ENCODE measurements at regions of chr10 and their contacts with region 1.

Region 1: DNA sequence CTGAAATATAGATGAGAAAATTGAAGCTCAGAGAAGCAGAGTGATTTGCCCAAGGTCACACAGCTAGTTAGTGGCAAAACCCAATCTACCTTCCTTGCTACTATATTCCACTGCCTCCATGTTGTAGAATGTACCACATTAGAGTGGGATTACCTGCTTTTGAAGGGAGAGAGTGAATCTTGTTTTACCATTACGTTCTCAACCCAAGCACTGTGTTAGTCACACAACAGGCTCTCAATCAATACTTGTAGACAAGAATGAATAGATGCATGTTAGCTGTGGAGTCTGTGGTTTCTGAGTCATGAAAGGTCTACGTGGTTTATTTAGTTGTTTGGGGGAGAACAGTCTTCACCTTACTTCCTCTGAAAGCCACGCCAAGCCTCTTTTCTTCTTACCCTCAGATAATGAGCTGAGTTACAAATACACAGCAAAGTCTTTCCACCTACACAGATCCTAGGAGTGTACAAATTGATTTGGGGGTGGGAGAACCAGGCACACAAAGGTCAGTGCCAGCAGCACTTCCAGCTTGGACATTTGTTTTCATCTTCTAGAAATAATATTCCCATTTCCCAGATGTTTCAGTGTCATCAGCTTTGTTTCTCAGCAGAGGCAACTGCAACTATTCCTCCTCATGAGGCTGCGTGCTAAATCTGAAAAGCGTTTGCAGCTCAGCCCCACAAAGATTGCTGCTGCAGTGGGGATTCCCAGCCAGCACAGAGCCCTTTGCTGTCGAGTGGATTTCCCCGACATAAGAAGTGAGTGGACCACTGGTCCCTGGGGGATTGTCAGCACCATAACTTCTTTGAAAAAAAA is 71.5 kb upstream of the ADO start:
- DNase-seq: peak in 8 of 9 donors; percentile 54 to 83 (median 76)
- ATAC-seq: peak; percentile 92
- H3K4me3 ChIP-seq: no peak overlapping the region
- H3K4me3 Mint-ChIP-seq: peak overlapping the region in 7 of 10 donors; percentile 14 to 72 (median 65)
- H3K27ac ChIP-seq: peak overlapping the region; percentile 22
- H3K27ac Mint-ChIP-seq: peak overlapping the region in 2 of 9 donors; percentile 78 to 85
- H3K4me1 ChIP-seq: peaks cover 24 to 49% of the 10 kb centered on the region in 2 donors
- H3K4me1 Mint-ChIP-seq: peaks cover 0 to 17% (median 0%) of the 10 kb centered on the region in 7 donors
- H3K27me3 ChIP-seq: no peaks in the 10 kb centered on the region
- H3K27me3 Mint-ChIP-seq: peaks cover 0 to 14% (median 0%) of the 10 kb centered on the region in 5 donors

Region 2: GRCh38 chr10:61992671-61993668 is 740.1 kb before region 1 on chr10:
- CTCF ChIA-PET with region 1: no interaction called
- POLR2A ChIA-PET with region 1: no interaction called
- intact Hi-C with region 1: loop called in 1 of 2 experiments (anchors 5 kb)
- DNase-seq: peak in 8 of 9 donors; percentile 39 to 85 (median 72)
- ATAC-seq: peak; percentile 90
- H3K4me3 ChIP-seq: peak overlapping the region; percentile 28
- H3K4me3 Mint-ChIP-seq: peak overlapping the region in 9 of 10 donors; percentile 61 to 89 (median 64)
- H3K27ac ChIP-seq: peak overlapping the region; percentile 63
- H3K27ac Mint-ChIP-seq: peak overlapping the region; percentile 82 to 96 (median 93)
- H3K4me1 ChIP-seq: peaks cover 33 to 37% of the 10 kb centered on the region in 2 donors
- H3K4me1 Mint-ChIP-seq: peaks cover 28 to 81% (median 70%) of the 10 kb centered on the region in 7 donors
- H3K27me3 ChIP-seq: no peaks in the 10 kb centered on the region
- H3K27me3 Mint-ChIP-seq: no peaks in the 10 kb centered on the region

Region 3: DNA sequence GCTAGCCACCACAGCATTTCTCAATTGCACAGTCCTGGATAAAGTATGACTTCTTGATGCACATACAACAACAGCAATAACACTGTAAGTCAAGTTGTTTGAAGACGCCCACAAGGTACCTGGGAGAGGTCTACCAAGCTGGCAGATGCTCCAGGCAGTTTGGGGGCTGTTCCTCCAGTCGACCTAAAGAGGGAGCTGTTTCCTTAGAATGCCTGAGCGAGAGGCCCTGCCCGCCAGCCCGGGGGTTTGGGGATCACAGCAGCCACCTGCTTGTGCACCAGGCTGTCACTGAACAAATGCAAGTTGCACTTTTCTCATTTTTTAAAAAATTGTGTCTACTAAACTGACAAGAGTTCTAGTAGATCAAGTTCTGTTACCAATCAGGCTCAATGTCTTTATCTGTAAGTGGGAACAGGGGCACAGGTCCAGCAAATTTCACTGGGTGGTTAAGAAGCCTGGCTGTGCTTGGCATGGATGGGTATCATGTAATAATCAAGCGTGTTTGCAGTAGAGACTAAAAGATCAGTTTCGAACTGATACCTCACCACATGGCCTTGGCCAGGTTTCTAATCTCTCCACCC is 122.3 kb before region 1 on chr10:
- CTCF ChIA-PET with region 1: interaction called, 3 read pairs
- POLR2A ChIA-PET with region 1: no interaction called
- intact Hi-C with region 1: loop called in 1 of 2 experiments (anchors 2 kb)
- DNase-seq: peak; percentile 48 to 81 (median 74)
- ATAC-seq: peak; percentile 93
- H3K4me3 ChIP-seq: no peak overlapping the region
- H3K4me3 Mint-ChIP-seq: no peak overlapping the region
- H3K27ac ChIP-seq: no peak overlapping the region
- H3K27ac Mint-ChIP-seq: peak overlapping the region in 1 of 9 donors; percentile 50
- H3K4me1 ChIP-seq: no peaks in the 10 kb centered on the region
- H3K4me1 Mint-ChIP-seq: peaks cover 0 to 36% (median 0%) of the 10 kb centered on the region in 7 donors
- H3K27me3 ChIP-seq: no peaks in the 10 kb centered on the region
- H3K27me3 Mint-ChIP-seq: peaks cover 0 to 14% (median 4%) of the 10 kb centered on the region in 5 donors

Region 4: GRCh38 chr10:62681211-62681940 is 51.7 kb before region 1 on chr10:
- CTCF ChIA-PET with region 1: no interaction called
- POLR2A ChIA-PET with region 1: no interaction called
- intact Hi-C with region 1: loop called (anchors 1 to 2 kb)
- DNase-seq: peak in 8 of 9 donors; percentile 7 to 84 (median 22)
- ATAC-seq: peak; percentile 96
- H3K4me3 ChIP-seq: no peak overlapping the region
- H3K4me3 Mint-ChIP-seq: peak overlapping the region in 1 of 10 donors; percentile 59
- H3K27ac ChIP-seq: no peak overlapping the region
- H3K27ac Mint-ChIP-seq: peak overlapping the region in 3 of 9 donors; percentile 11 to 83 (median 78)
- H3K4me1 ChIP-seq: peaks cover 6 to 18% of the 10 kb centered on the region in 2 donors
- H3K4me1 Mint-ChIP-seq: peaks cover 8 to 45% (median 14%) of the 10 kb centered on the region in 7 donors
- H3K27me3 ChIP-seq: no peaks in the 10 kb centered on the region
- H3K27me3 Mint-ChIP-seq: peaks cover 0 to 6% (median 0%) of the 10 kb centered on the region in 5 donors

Region 5: GRCh38 chr10:62759599-62760175 is 26.6 kb after region 1 on chr10:
- CTCF ChIA-PET with region 1: no interaction called
- POLR2A ChIA-PET with region 1: no interaction called
- intact Hi-C with region 1: loop called (anchors 2 kb)
- DNase-seq: no peak
- ATAC-seq: peak; percentile 49
- H3K4me3 ChIP-seq: no peak overlapping the region
- H3K4me3 Mint-ChIP-seq: no peak overlapping the region
- H3K27ac ChIP-seq: no peak overlapping the region
- H3K27ac Mint-ChIP-seq: no peak overlapping the region
- H3K4me1 ChIP-seq: peaks cover 15 to 20% of the 10 kb centered on the region in 2 donors
- H3K4me1 Mint-ChIP-seq: peaks cover 17 to 27% (median 20%) of the 10 kb centered on the region in 7 donors
- H3K27me3 ChIP-seq: no peaks in the 10 kb centered on the region
- H3K27me3 Mint-ChIP-seq: peaks cover 0 to 3% (median 0%) of the 10 kb centered on the region in 5 donors

Region 6: DNA sequence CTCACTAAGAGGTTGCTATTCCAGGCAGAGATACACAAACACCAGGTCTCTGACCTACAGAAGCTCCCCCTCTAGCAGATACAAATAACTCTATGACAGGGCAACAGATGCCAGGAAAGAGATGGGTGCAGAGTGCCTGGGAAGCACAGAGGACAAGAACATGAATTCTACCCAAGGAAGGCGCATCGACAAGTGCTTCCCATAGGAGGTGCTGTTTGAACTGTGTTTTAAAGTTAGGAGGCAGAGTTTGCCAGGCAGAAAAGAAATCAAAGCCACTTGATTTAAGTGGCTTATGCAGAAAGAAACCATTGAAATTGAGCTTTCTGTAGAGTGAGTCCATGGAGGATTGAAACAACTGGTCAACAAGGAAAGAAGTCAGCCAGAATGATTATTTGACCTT is 118.4 kb after region 1 on chr10:
- CTCF ChIA-PET with region 1: no interaction called
- POLR2A ChIA-PET with region 1: no interaction called
- intact Hi-C with region 1: loop called in 1 of 2 experiments (anchors 1 kb)
- DNase-seq: no peak
- ATAC-seq: no peak
- H3K4me3 ChIP-seq: no peak overlapping the region
- H3K4me3 Mint-ChIP-seq: no peak overlapping the region
- H3K27ac ChIP-seq: no peak overlapping the region
- H3K27ac Mint-ChIP-seq: no peak overlapping the region
- H3K4me1 ChIP-seq: peaks cover 0 to 39% of the 10 kb centered on the region in 2 donors
- H3K4me1 Mint-ChIP-seq: peaks cover 10 to 54% (median 14%) of the 10 kb centered on the region in 7 donors
- H3K27me3 ChIP-seq: no peaks in the 10 kb centered on the region
- H3K27me3 Mint-ChIP-seq: peaks cover 0 to 18% (median 13%) of the 10 kb centered on the region in 5 donors

Region 7: DNA sequence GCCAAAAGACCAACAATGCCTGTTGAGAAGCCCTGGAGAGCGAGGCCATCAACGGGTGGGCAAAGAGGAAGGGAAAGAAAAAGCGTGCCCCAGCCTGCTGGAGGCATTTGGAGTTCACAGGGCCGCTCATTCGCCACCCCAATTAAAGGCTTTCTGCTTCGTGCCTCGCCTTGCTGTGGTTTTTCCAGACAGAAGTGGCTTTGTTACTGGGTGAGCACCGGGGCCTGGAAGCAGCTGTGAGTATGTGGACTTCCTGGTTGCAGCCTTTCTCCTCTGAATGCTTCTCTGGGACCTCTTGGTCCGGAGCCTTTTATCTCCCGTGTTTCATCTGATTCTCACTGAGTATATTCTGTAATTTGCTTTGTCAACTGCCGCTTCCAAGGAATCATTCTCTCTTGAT is 201.2 kb after region 1 on chr10:
- CTCF ChIA-PET with region 1: no interaction called
- POLR2A ChIA-PET with region 1: no interaction called
- intact Hi-C with region 1: no loop called
- DNase-seq: no peak
- ATAC-seq: no peak
- H3K4me3 ChIP-seq: no peak overlapping the region
- H3K4me3 Mint-ChIP-seq: no peak overlapping the region
- H3K27ac ChIP-seq: no peak overlapping the region
- H3K27ac Mint-ChIP-seq: no peak overlapping the region
- H3K4me1 ChIP-seq: no peaks in the 10 kb centered on the region
- H3K4me1 Mint-ChIP-seq: no peaks in the 10 kb centered on the region
- H3K27me3 ChIP-seq: no peaks in the 10 kb centered on the region
- H3K27me3 Mint-ChIP-seq: peaks cover 6 to 22% (median 16%) of the 10 kb centered on the region in 5 donors

Measured in naive thymus-derived CD4-positive, alpha-beta T cell (primary cell).